ENCODE measurements at regions of chr2 and their contacts with region 1.

Region 1: GRCh38 chr2:177164584-177165052 is 48.0 kb upstream of the HNRNPA3 start:
- DNase-seq: peak; percentile 56 to 92
- H3K4me3 ChIP-seq: peak overlapping the region; percentile 53 to 60
- H3K27ac ChIP-seq: peak overlapping the region; percentile 80 to 91
- H3K4me1 ChIP-seq: peaks cover 0 to 8% of the 10 kb centered on the region in 2 donors
- H3K27me3 ChIP-seq: no peaks in the 10 kb centered on the region
- CTCF ChIP-seq: peak; percentile 94 to 100 (median 100)

Region 2: DNA sequence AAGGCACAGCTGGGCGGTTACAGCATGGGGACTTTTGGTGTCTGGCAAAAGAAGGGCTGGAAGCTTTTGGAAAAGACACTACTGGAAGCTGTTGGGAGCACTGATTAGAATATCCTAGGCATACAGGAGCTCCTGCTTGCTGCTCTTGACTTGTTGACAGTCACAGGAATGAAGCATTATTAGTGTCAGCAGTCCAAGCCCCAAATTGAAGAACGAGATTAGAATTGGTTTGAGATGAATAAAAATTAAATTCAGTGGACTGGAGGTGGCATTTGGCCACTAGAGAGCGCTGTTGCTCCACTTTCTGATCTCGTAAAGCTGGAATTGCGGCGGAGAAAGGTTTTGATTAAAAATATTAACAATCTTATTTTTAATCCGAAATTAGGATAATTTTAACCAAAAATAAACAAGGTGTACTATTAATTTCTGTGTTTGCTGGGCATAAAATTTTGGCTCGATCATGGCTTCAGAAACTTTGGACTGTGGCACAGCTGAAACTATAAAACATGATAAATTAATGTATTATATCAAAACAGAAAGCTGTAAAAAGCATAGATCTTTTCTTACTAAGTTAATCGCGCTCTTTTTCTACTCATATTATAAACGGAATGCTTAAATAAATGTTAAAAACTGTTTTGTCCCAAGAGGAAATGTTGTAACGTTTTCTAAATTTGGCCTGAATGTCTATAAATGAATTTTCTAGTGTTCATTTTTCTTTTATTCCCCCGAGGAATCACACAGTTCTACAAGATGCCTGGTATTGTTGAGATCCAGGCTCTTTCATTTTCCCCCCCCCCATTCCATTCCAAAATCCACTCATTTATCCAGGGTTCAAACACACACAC is 1037.5 kb before region 1 on chr2:
- intact Hi-C with region 1: loop called (anchors 5 kb)
- DNase-seq: peak in 1 of 2 donors; percentile 81
- H3K4me3 ChIP-seq: no peak overlapping the region
- H3K27ac ChIP-seq: no peak overlapping the region
- H3K4me1 ChIP-seq: peaks cover 10 to 17% of the 10 kb centered on the region in 2 donors
- H3K27me3 ChIP-seq: no peaks in the 10 kb centered on the region
- CTCF ChIP-seq: peak; percentile 78 to 89 (median 86)

Region 3: GRCh38 chr2:177212106-177212890 is 47.7 kb after region 1 on chr2 and contains the start of gene HNRNPA3:
- intact Hi-C with region 1: loop called (anchors 1 kb)
- DNase-seq: peak; percentile 96 to 99
- H3K4me3 ChIP-seq: peak within 1 kb of the TSS; percentile 78 to 99
- H3K27ac ChIP-seq: peak within 1 kb of the TSS; percentile 97 to 100
- H3K4me1 ChIP-seq: peaks cover 20 to 35% of the 10 kb centered on the region in 2 donors
- H3K27me3 ChIP-seq: no peaks in the 10 kb centered on the region
- CTCF ChIP-seq: peak; percentile 10 to 32 (median 11)
- total RNA-seq, gene HNRNPA3: 32.9 TPM

Region 4: GRCh38 chr2:177295484-177295883 is 130.9 kb after region 1 on chr2:
- intact Hi-C with region 1: loop called (anchors 1 kb)
- DNase-seq: no peak
- H3K4me3 ChIP-seq: peak overlapping the region; percentile 11 to 37
- H3K27ac ChIP-seq: peak overlapping the region; percentile 66 to 74
- H3K4me1 ChIP-seq: peaks cover 0 to 7% of the 10 kb centered on the region in 2 donors
- H3K27me3 ChIP-seq: no peaks in the 10 kb centered on the region
- CTCF ChIP-seq: no peak

Region 5: GRCh38 chr2:177419274-177419673 is 254.7 kb after region 1 on chr2:
- intact Hi-C with region 1: loop called (anchors 5 kb)
- DNase-seq: no peak
- H3K4me3 ChIP-seq: no peak overlapping the region
- H3K27ac ChIP-seq: no peak overlapping the region
- H3K4me1 ChIP-seq: peaks cover 0 to 7% of the 10 kb centered on the region in 2 donors
- H3K27me3 ChIP-seq: no peaks in the 10 kb centered on the region
- CTCF ChIP-seq: no peak

Measured in ascending aorta (tissue), 2 donors.